ENCODE measurements at regions of chr11 and their contacts with region 1.

Region 1: GRCh38 chr11:119155733-119156492 is 7.1 kb downstream of the ABCG4 start:
- DNase-seq: peak; percentile 55 to 57
- ATAC-seq: peak; percentile 75 to 94
- H3K4me3 ChIP-seq: no peak overlapping the region
- H3K27ac ChIP-seq: no peak overlapping the region
- H3K4me1 ChIP-seq: 0 out of 3 replicates have a peak, but pooled peaks cover 2% of the 10 kb centered on the region
- CTCF ChIP-seq: no peak
- EP300 ChIP-seq: no peak
- POLR2A ChIP-seq: no peak
- RAD21 ChIP-seq: no peak

Region 2: DNA sequence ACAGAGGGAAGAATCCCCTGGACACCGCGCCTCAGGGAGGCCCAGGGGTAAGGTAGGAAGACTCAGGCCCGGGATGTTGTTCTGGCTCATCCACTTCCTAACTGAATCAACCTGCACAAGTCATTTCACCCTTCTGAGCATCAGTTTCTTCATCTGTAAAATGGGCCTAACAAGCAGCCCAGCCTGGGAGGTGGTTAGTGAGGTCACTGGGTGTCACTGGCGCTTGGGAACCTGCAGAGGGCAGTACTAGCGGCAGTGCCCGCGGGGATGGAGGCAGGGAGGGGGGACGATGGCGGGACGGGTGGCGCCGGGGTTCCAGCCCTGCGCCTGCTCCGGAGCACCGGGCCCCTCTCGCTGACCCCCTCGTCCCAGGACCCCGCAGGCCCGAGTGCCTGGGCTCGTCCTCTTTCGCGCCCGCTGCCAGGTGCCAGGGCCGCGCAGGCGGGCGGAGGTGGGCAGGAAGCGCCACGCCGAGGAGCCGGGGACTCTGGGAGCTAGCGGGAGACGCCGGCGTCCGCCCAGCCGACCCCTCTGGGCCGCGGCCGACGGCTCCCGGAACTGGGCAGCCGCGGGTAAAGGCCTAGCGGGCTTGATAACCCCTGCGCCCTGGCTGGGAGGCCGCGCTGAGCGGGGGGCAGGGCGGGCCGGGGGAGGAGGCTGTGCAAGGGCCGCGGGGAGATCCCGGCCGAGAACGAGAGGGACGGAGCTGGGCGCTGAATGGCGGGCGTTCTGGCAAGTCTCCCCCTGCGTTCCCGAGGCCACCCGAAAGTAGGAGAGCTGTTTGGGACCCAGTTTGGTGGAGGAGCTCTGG is 12.8 kb after region 1 on chr11 and contains the start of gene NLRX1:
- CTCF ChIA-PET with region 1: interaction called, 13 read pairs
- POLR2A ChIA-PET with region 1: interaction called, 3 read pairs
- DNase-seq: peak; percentile 86 to 87
- ATAC-seq: peak; percentile 92
- H3K4me3 ChIP-seq: peak within 1 kb of the TSS; percentile 75
- H3K27ac ChIP-seq: peak within 1 kb of the TSS; percentile 95 to 99
- H3K4me1 ChIP-seq: peaks cover 16% of the 10 kb centered on the region
- CTCF ChIP-seq: peak; percentile 73
- EP300 ChIP-seq: no peak
- POLR2A ChIP-seq: peak; percentile 84
- RAD21 ChIP-seq: peak; percentile 15 to 30; a peak in 1 of 5 replicates
- polyA plus RNA-seq, gene NLRX1: 8.4 and 10.4 TPM in 2 replicates